Mucosa of descending colon (tissue), 3 donors: ENCODE measurements at regions of chr9 and their contacts with region 1.

Region 1: DNA sequence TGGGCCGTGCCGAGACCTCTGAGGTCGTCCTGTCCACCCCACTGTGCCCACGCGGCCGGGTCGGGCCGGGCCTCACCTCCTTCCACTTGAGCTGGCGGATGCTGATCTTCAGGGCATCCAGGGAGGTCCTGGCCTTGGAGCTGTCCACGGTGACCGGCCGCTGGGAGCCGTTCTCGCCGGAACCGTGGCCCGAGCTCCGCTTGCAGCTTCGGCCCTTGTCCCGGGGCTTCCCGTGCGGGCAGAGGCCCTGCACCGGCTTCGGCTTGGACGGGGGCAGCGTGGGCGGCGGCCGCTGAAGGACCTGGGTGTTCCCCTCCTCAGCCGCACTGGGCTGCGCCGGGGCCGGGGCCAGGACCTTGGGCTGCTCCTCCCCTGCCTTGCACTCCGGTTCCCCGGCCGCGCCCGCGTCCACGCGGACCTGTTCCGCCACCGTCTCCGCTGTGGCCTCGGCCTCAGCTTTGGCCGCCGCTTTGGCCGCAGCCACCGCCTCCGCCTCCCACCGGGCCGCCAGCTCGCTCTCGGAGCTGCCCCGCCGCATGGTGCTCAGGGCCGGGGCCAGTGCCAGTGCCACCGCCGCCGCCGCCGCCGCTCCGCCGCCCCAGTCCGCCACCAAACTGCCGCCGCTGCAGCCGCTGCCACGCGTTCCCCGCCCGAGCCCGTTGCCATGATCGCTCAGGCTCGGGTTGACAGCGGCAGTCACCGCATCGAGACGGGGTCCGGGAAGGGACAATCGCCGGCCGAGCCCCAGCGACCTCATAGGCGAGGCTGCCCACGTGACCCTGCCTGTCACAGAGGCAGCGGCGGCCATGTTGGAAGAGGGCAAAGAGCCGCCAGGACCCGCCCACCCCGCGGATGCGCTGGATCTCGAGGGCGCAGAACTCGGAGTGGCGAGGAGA is at the start of gene TTLL11:
- DNase-seq: peak; percentile 97 to 98 (median 98)
- ATAC-seq: peak; percentile 99
- H3K4me3 ChIP-seq: peak within 1 kb of the TSS; percentile 90
- H3K4me1 ChIP-seq: peaks cover 17% of the 10 kb centered on the region
- CTCF ChIP-seq: no peak
- total RNA-seq, gene TTLL11: 6.0 to 22.2 (median 6.4) TPM

Region 2: DNA sequence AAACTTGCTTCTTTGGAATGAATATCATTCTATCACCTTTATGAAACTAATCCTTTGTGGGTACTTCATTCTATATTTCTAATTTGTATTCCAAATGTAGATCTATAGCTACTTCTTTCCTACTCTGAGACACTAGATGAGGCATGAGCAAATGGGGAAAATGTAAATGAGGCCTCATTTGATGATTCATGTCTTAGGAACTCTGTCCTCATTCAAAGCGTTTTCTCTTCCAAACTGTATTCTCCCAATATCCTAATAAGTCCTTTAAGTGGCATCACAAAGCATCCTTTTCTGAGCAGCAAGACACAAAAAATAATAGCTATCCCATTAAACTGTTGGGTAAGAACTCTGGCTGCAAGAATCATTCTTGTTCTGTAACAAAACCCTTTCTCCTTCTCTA is 55.9 kb before region 1 on chr9:
- intact Hi-C with region 1: no loop called
- DNase-seq: no peak
- ATAC-seq: no peak
- H3K4me3 ChIP-seq: no peak overlapping the region
- H3K4me1 ChIP-seq: no peaks in the 10 kb centered on the region
- CTCF ChIP-seq: no peak

Region 3: GRCh38 chr9:122350638-122351355 is 257.9 kb after region 1 on chr9:
- intact Hi-C with region 1: loop called in 1 of 2 experiments (anchors 10 kb)
- DNase-seq: peak; percentile 79 to 91 (median 84)
- ATAC-seq: peak; percentile 82
- H3K4me3 ChIP-seq: no peak overlapping the region
- H3K4me1 ChIP-seq: peaks cover 14% of the 10 kb centered on the region
- CTCF ChIP-seq: peak; percentile 92

Region 4: DNA sequence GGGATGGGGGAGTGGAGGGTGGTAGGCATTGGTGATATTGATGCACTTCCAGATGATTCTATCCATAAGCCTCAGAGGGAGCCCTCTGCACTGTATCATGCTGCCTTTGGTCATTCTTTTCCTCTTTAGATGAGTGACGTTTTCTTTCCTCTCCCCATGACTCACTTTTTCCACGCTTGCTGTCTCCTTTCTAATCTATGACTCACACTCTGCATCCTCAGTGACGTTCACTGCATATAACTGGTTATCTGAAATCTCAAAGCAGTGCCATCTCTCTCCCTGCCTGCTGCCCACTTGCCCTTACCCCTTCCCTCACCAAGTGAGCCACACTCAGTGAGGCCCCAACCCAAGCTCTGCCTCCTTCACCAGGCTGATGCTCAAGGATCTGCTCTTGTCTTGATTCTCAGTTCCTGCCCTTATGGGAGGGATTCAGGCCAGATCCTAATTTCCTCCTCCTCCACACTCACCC is 309.6 kb after region 1 on chr9:
- intact Hi-C with region 1: no loop called
- DNase-seq: no peak
- ATAC-seq: peak; percentile 54
- H3K4me3 ChIP-seq: no peak overlapping the region
- H3K4me1 ChIP-seq: no peaks in the 10 kb centered on the region
- CTCF ChIP-seq: no peak